ENCODE measurements at regions of chr5 and their contacts with region 1.

Region 1: GRCh38 chr5:119400245-119400644 is 44.4 kb downstream of the TNFAIP8 start:
- DNase-seq: peak; percentile 29
- H3K4me3 ChIP-seq: no peak overlapping the region
- H3K27ac ChIP-seq: no peak overlapping the region
- H3K4me1 ChIP-seq: no peaks in the 10 kb centered on the region
- H3K27me3 ChIP-seq: no peaks in the 10 kb centered on the region
- CTCF ChIP-seq: no peak

Region 2: GRCh38 chr5:119267958-119268386 is 132.3 kb before region 1 on chr5:
- intact Hi-C with region 1: loop called (anchors 5 kb)
- DNase-seq: peak; percentile 90
- H3K4me3 ChIP-seq: peak overlapping the region; percentile 52
- H3K27ac ChIP-seq: peak overlapping the region; percentile 90
- H3K4me1 ChIP-seq: peaks cover 3% of the 10 kb centered on the region
- H3K27me3 ChIP-seq: no peaks in the 10 kb centered on the region
- CTCF ChIP-seq: peak; percentile 32

Region 3: GRCh38 chr5:119614838-119615237 is 214.6 kb after region 1 on chr5:
- intact Hi-C with region 1: no loop called
- DNase-seq: no peak
- H3K4me3 ChIP-seq: no peak overlapping the region
- H3K27ac ChIP-seq: no peak overlapping the region
- H3K4me1 ChIP-seq: no peaks in the 10 kb centered on the region
- H3K27me3 ChIP-seq: no peaks in the 10 kb centered on the region
- CTCF ChIP-seq: no peak